Activated CD4-positive, alpha-beta memory T cell treated with anti-CD3 and anti-CD28 coated beads for 36 hours (primary cell): ENCODE measurements at regions of chr11 and their contacts with region 1.

Region 1: GRCh38 chr11:85627998-85628770 is at the start of gene TMEM126B:
- DNase-seq: peak; percentile 98
- H3K4me3 Mint-ChIP-seq: peak within 1 kb of the TSS; percentile 100
- H3K27ac Mint-ChIP-seq: peak within 1 kb of the TSS; percentile 99
- H3K4me1 Mint-ChIP-seq: peaks cover 38% of the 10 kb centered on the region
- H3K27me3 Mint-ChIP-seq: no peaks in the 10 kb centered on the region
- total RNA-seq, gene TMEM126B: 59.8 to 64.5 TPM

Region 2: GRCh38 chr11:85647604-85648299 is 19.6 kb after region 1 on chr11 and contains the start of gene TMEM126A:
- CTCF ChIA-PET with region 1: interaction called, 8 read pairs
- POLR2A ChIA-PET with region 1: interaction called, 21 read pairs
- intact Hi-C with region 1: loop called (anchors 1 kb)
- DNase-seq: peak; percentile 96
- H3K4me3 Mint-ChIP-seq: peak within 1 kb of the TSS; percentile 94
- H3K27ac Mint-ChIP-seq: peak within 1 kb of the TSS; percentile 86
- H3K4me1 Mint-ChIP-seq: peaks cover 26% of the 10 kb centered on the region
- H3K27me3 Mint-ChIP-seq: peaks cover 11% of the 10 kb centered on the region
- total RNA-seq, gene TMEM126A: 45.3 to 49.4 TPM

Region 3: GRCh38 chr11:85737748-85738147 is 109.6 kb after region 1 on chr11:
- CTCF ChIA-PET with region 1: no interaction called
- POLR2A ChIA-PET with region 1: no interaction called
- intact Hi-C with region 1: no loop called
- DNase-seq: peak; percentile 34
- H3K4me3 Mint-ChIP-seq: no peak overlapping the region
- H3K27ac Mint-ChIP-seq: no peak overlapping the region
- H3K4me1 Mint-ChIP-seq: peaks cover 16% of the 10 kb centered on the region
- H3K27me3 Mint-ChIP-seq: no peaks in the 10 kb centered on the region

Region 4: GRCh38 chr11:86302100-86302793 is 674.1 kb after region 1 on chr11 and contains the start of gene HIKESHI:
- CTCF ChIA-PET with region 1: no interaction called
- POLR2A ChIA-PET with region 1: no interaction called
- intact Hi-C with region 1: loop called (anchors 2 kb)
- DNase-seq: peak; percentile 95
- H3K4me3 Mint-ChIP-seq: peak within 1 kb of the TSS; percentile 100
- H3K27ac Mint-ChIP-seq: peak within 1 kb of the TSS; percentile 93
- H3K4me1 Mint-ChIP-seq: peaks cover 23% of the 10 kb centered on the region
- H3K27me3 Mint-ChIP-seq: no peaks in the 10 kb centered on the region
- total RNA-seq, gene HIKESHI: 53.1 to 55.1 TPM